ENCODE measurements at regions of chr3 and their contacts with region 1.

Region 1: GRCh38 chr3:16511681-16512434 is 1.6 kb downstream of the RFTN1 start:
- DNase-seq: peak; percentile 23 to 60 (median 58)
- H3K4me3 ChIP-seq: peak overlapping the region; percentile 82
- H3K27ac ChIP-seq: peak overlapping the region; percentile 21 to 63
- H3K4me1 ChIP-seq: peaks cover 14% of the 10 kb centered on the region
- H3K27me3 ChIP-seq: no peaks in the 10 kb centered on the region
- CTCF ChIP-seq: no peak
- EP300 ChIP-seq: no peak
- POLR2A ChIP-seq: peak; percentile 20

Region 2: GRCh38 chr3:15074493-15074892 is 1437.4 kb before region 1 on chr3:
- intact Hi-C with region 1: no loop called
- DNase-seq: no peak
- H3K4me3 ChIP-seq: no peak overlapping the region
- H3K27ac ChIP-seq: no peak overlapping the region
- H3K4me1 ChIP-seq: no peaks in the 10 kb centered on the region
- H3K27me3 ChIP-seq: no peaks in the 10 kb centered on the region
- CTCF ChIP-seq: no peak
- EP300 ChIP-seq: no peak
- POLR2A ChIP-seq: no peak

Region 3: GRCh38 chr3:16290007-16290826 is 221.6 kb before region 1 on chr3:
- intact Hi-C with region 1: loop called (anchors 5 to 10 kb)
- DNase-seq: peak in 4 of 5 donors; percentile 36 to 70 (median 52)
- H3K4me3 ChIP-seq: no peak overlapping the region
- H3K27ac ChIP-seq: no peak overlapping the region
- H3K4me1 ChIP-seq: peaks cover 2% of the 10 kb centered on the region
- H3K27me3 ChIP-seq: no peaks in the 10 kb centered on the region
- CTCF ChIP-seq: peak; percentile 69 to 85 (median 79)
- EP300 ChIP-seq: no peak
- POLR2A ChIP-seq: no peak

Region 4: DNA sequence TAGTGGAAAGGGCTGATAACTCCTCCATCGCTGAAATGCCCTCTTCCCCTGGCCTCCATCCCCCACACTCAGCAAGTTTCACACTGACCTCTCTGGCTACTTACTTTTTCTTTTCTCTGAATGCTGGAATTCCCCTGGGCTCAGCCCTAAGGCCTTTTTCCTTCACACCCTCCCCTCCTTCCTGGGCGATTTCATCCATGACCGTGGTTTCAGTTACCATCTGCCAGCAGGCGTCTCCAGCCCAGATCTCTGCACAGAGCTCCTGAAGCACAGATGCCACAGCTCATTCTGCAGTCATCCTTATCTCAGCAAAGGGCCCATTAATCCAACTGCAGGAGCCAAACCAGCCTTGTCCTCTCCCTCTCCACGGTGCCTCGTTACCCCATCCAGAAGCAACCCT is 112.4 kb before region 1 on chr3:
- intact Hi-C with region 1: loop called in 2 of 4 experiments (anchors 10 kb)
- DNase-seq: peak; percentile 59 to 71 (median 63)
- H3K4me3 ChIP-seq: no peak overlapping the region
- H3K27ac ChIP-seq: peak overlapping the region; percentile 10 to 55
- H3K4me1 ChIP-seq: peaks cover 15% of the 10 kb centered on the region
- H3K27me3 ChIP-seq: no peaks in the 10 kb centered on the region
- CTCF ChIP-seq: peak in 2 of 3 donors; percentile 20 to 30
- EP300 ChIP-seq: no peak
- POLR2A ChIP-seq: no peak

Region 5: GRCh38 chr3:16448639-16449070 is 63.2 kb before region 1 on chr3:
- intact Hi-C with region 1: loop called in 2 of 4 experiments (anchors 10 kb)
- DNase-seq: peak; percentile 82 to 87 (median 85)
- H3K4me3 ChIP-seq: no peak overlapping the region
- H3K27ac ChIP-seq: peak overlapping the region in 1 of 2 donors; percentile 42
- H3K4me1 ChIP-seq: peaks cover 3% of the 10 kb centered on the region
- H3K27me3 ChIP-seq: no peaks in the 10 kb centered on the region
- CTCF ChIP-seq: no peak
- EP300 ChIP-seq: no peak
- POLR2A ChIP-seq: no peak

Region 6: GRCh38 chr3:16456784-16457415 is 55.0 kb before region 1 on chr3:
- intact Hi-C with region 1: loop called in 1 of 4 experiments (anchors 10 kb)
- DNase-seq: peak in 1 of 5 donors; percentile 56
- H3K4me3 ChIP-seq: no peak overlapping the region
- H3K27ac ChIP-seq: no peak overlapping the region
- H3K4me1 ChIP-seq: peaks cover 7% of the 10 kb centered on the region
- H3K27me3 ChIP-seq: no peaks in the 10 kb centered on the region
- CTCF ChIP-seq: no peak
- EP300 ChIP-seq: no peak
- POLR2A ChIP-seq: no peak

Region 7: GRCh38 chr3:17151598-17152373 is 639.9 kb after region 1 on chr3:
- intact Hi-C with region 1: no loop called
- DNase-seq: no peak
- H3K4me3 ChIP-seq: no peak overlapping the region
- H3K27ac ChIP-seq: no peak overlapping the region
- H3K4me1 ChIP-seq: no peaks in the 10 kb centered on the region
- H3K27me3 ChIP-seq: no peaks in the 10 kb centered on the region
- CTCF ChIP-seq: no peak
- EP300 ChIP-seq: no peak
- POLR2A ChIP-seq: no peak